T-cell (primary cell): ENCODE measurements at regions of chr5 and their contacts with region 1.

Region 1: DNA sequence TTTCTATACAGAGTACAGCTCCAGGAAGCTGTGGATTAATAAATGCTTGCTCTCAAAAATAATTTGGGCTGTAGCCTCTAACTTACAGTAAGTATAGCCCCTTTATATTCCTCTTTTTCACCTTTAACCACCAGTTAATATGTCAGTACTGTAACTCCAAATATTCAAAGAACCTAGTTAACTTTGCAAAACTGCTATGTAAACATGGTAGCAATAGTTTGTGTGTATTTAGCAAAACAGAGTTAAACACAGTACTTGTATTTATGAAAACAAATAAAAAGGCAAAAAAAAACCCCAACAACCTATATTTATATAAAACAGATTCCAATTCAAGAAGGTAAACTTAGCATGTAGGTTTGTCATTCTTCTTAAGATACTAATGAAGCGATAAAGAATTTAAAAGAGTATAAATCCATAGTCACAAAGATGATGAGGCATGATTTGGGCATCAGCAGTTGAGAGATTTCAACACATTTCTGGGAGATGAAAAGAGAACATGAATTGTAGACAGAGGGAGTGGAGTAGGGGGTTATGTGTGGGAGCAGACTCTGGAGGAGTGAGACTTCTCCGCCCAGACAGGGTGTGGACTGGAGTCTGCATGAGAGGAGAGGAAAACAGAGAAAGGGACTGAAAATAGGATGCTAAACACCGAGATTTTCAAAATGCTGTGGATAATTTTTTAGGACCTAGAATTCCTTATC is 47.0 kb upstream of the F2RL1 start:
- DNase-seq: no peak
- ATAC-seq: no peak
- H3K4me3 ChIP-seq: no peak overlapping the region
- H3K4me3 Mint-ChIP-seq: no peak overlapping the region
- H3K27ac ChIP-seq: no peak overlapping the region
- H3K27ac Mint-ChIP-seq: no peak overlapping the region
- H3K4me1 ChIP-seq: peaks cover 0 to 3% of the 10 kb centered on the region in 2 experiments
- H3K4me1 Mint-ChIP-seq: peaks cover 0 to 6% (median 3%) of the 10 kb centered on the region in 3 donors
- H3K27me3 ChIP-seq: no peaks in the 10 kb centered on the region
- H3K27me3 Mint-ChIP-seq: no peaks in the 10 kb centered on the region

Region 2: GRCh38 chr5:75461679-75462078 is 1310.2 kb before region 1 on chr5:
- CTCF ChIA-PET with region 1: no interaction called
- POLR2A ChIA-PET with region 1: no interaction called
- DNase-seq: no peak
- ATAC-seq: no peak
- H3K4me3 ChIP-seq: no peak overlapping the region
- H3K4me3 Mint-ChIP-seq: no peak overlapping the region
- H3K27ac ChIP-seq: no peak overlapping the region
- H3K27ac Mint-ChIP-seq: no peak overlapping the region
- H3K4me1 ChIP-seq: peaks cover 2 to 11% of the 10 kb centered on the region in 2 experiments
- H3K4me1 Mint-ChIP-seq: peaks cover 52 to 54% (median 53%) of the 10 kb centered on the region in 3 donors
- H3K27me3 ChIP-seq: no peaks in the 10 kb centered on the region
- H3K27me3 Mint-ChIP-seq: no peaks in the 10 kb centered on the region

Region 3: DNA sequence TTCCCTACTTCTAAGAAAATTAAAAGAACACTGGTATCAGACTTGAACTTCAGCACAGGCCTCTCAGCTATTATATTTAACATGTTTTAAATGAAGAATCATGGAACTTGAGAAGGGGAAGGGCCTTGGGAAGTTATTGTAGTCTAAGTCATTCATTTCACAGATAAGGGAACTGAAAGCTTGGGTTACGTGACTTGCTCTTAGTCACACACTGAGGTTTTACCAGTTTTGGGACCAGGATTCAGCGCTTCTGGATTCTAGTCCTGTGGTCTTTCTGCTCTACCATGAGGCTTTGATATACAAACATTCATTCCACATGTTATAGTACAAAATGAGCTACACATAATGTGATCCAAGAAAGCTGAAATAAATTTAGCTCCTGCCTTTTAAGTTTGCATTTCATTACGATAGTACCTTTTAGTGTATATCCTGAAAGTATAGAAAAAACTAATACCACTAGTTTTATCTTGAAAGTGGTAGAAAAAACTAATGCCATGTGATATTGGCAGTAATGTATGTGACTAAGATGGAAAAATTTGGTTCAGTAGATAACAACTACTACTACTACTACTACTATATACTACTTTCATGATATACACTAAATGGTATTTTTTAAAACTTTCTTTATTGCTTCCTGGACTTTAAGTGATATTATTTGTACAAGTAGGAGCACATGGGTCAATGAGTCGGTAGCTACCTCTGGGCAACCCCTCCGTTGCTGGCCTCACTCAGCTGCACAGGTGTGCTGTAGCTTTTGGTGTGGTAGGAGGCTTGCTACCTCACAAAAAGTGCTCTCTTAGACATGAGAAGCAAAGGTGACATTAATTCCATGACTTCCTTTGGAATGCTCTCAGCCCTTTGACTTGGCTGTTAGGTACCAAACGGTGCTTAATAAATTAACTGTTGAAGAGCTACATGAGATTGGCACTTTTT is 189.4 kb before region 1 on chr5:
- CTCF ChIA-PET with region 1: interaction called, 5 to 11 read pairs
- POLR2A ChIA-PET with region 1: no interaction called
- DNase-seq: no peak
- ATAC-seq: no peak
- H3K4me3 ChIP-seq: no peak overlapping the region
- H3K4me3 Mint-ChIP-seq: no peak overlapping the region
- H3K27ac ChIP-seq: no peak overlapping the region
- H3K27ac Mint-ChIP-seq: peak overlapping the region in 1 of 2 donors; percentile 53
- H3K4me1 ChIP-seq: peaks cover 0 to 2% of the 10 kb centered on the region in 2 experiments
- H3K4me1 Mint-ChIP-seq: peaks cover 0 to 31% (median 27%) of the 10 kb centered on the region in 3 donors
- H3K27me3 ChIP-seq: no peaks in the 10 kb centered on the region
- H3K27me3 Mint-ChIP-seq: no peaks in the 10 kb centered on the region

Region 4: DNA sequence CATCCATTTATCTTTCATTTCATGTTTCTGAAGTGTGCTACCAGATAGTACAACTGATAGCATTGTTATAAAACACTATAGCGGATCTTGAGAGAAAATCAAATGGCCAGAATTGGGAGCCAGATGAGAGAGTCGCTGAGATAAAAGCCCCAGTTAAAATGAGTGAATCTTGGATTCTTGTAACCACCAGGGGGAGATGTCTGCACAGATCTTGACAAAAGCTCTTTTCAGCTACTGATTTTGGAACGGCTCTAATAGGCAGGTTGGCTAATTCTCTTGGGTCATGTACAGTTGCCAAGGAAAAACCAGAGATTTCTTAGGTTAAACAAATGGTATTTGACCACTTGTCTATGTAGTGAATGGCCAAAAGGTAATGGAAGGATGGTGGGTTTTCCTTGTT is 170.4 kb before region 1 on chr5:
- CTCF ChIA-PET with region 1: interaction called, 4 to 73 read pairs
- POLR2A ChIA-PET with region 1: interaction called in 1 of 2 experiments, 4 read pairs
- DNase-seq: peak in 12 of 35 experiments; percentile 6 to 72 (median 19)
- ATAC-seq: peak; percentile 49 to 63 (median 55)
- H3K4me3 ChIP-seq: no peak overlapping the region
- H3K4me3 Mint-ChIP-seq: no peak overlapping the region
- H3K27ac ChIP-seq: no peak overlapping the region
- H3K27ac Mint-ChIP-seq: no peak overlapping the region
- H3K4me1 ChIP-seq: no peaks in the 10 kb centered on the region
- H3K4me1 Mint-ChIP-seq: peaks cover 0 to 9% (median 9%) of the 10 kb centered on the region in 3 donors
- H3K27me3 ChIP-seq: no peaks in the 10 kb centered on the region
- H3K27me3 Mint-ChIP-seq: no peaks in the 10 kb centered on the region

Region 5: DNA sequence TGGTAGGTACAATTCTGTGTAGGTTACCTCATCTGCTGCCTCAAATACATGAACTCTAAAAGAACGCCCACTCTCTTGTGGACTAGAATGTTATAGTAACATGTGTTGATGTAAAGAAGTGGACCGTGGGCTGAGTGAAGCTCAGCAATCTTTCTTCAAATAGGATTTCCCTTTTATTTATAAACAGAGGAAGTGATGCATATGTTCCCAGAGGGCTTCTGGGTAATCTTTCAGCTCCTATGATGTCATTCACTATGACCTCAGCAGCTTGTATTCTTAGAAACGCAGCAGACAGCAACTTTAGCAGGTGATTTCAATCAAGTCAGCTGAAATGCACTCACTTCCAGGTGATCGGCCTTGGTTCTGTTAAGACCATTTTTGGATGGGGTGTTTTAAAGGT is 163.0 kb before region 1 on chr5:
- CTCF ChIA-PET with region 1: interaction called, 4 to 20 read pairs
- POLR2A ChIA-PET with region 1: interaction called in 1 of 2 experiments, 5 read pairs
- DNase-seq: peak in 5 of 35 experiments; percentile 2 to 34 (median 10)
- ATAC-seq: peak in 2 of 4 experiments; percentile 12 to 54
- H3K4me3 ChIP-seq: no peak overlapping the region
- H3K4me3 Mint-ChIP-seq: no peak overlapping the region
- H3K27ac ChIP-seq: no peak overlapping the region
- H3K27ac Mint-ChIP-seq: no peak overlapping the region
- H3K4me1 ChIP-seq: no peaks in the 10 kb centered on the region
- H3K4me1 Mint-ChIP-seq: peaks cover 6 to 33% (median 12%) of the 10 kb centered on the region in 3 donors
- H3K27me3 ChIP-seq: no peaks in the 10 kb centered on the region
- H3K27me3 Mint-ChIP-seq: no peaks in the 10 kb centered on the region

Region 6: DNA sequence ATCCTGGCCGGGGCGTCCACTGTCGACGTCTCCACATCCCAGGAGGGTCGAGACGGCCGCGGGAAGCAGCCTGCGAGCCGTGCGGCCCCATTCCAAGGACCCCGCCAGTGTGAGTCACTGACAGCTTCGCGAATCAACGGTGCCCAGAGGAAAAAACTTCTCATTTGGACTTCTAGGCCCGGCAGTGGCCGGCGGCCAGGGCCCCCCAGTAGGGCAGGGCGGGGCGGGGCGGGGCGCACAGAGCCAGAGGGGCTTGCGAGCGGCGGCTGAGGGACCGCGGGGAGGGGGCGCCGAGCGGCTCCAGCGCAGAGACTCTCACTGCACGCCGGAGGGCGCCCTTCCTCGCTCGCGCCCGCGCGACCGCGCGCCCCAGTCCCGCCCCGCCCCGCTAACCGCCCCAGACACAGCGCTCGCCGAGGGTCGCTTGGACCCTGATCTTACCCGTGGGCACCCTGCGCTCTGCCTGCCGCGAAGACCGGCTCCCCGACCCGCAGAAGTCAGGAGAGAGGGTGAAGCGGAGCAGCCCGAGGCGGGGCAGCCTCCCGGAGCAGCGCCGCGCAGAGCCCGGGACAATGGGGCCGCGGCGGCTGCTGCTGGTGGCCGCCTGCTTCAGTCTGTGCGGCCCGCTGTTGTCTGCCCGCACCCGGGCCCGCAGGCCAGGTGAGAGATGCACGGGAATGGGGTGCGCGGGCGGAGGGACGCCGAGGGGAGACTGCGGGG is 56.0 kb before region 1 on chr5 and contains the start of gene F2R:
- CTCF ChIA-PET with region 1: interaction called in 1 of 2 experiments, 19 read pairs
- POLR2A ChIA-PET with region 1: no interaction called
- DNase-seq: peak in 33 of 35 experiments; percentile 19 to 78 (median 47)
- ATAC-seq: peak; percentile 81 to 85 (median 83)
- H3K4me3 ChIP-seq: peak within 1 kb of the TSS; percentile 82 to 86
- H3K4me3 Mint-ChIP-seq: peak within 1 kb of the TSS; percentile 82 to 87 (median 85)
- H3K27ac ChIP-seq: no peak within 1 kb of the TSS
- H3K27ac Mint-ChIP-seq: peak within 1 kb of the TSS; percentile 34 to 52
- H3K4me1 ChIP-seq: peaks cover 3 to 47% of the 10 kb centered on the region in 2 experiments
- H3K4me1 Mint-ChIP-seq: peaks cover 28 to 49% (median 32%) of the 10 kb centered on the region in 3 donors
- H3K27me3 ChIP-seq: peaks cover 0 to 19% of the 10 kb centered on the region in 2 experiments
- H3K27me3 Mint-ChIP-seq: peaks cover 22 to 30% of the 10 kb centered on the region in 2 donors
- total RNA-seq, gene F2R: 4.3 to 16.3 (median 9.6) TPM

Region 7: DNA sequence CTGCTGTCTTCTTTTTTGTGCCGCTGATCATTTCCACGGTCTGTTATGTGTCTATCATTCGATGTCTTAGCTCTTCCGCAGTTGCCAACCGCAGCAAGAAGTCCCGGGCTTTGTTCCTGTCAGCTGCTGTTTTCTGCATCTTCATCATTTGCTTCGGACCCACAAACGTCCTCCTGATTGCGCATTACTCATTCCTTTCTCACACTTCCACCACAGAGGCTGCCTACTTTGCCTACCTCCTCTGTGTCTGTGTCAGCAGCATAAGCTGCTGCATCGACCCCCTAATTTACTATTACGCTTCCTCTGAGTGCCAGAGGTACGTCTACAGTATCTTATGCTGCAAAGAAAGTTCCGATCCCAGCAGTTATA is 38.8 kb before region 1 on chr5:
- CTCF ChIA-PET with region 1: interaction called, 8 to 24 read pairs
- POLR2A ChIA-PET with region 1: interaction called in 1 of 2 experiments, 3 read pairs
- DNase-seq: peak in 33 of 35 experiments; percentile 13 to 83 (median 52)
- ATAC-seq: peak; percentile 75 to 93 (median 79)
- H3K4me3 ChIP-seq: peak overlapping the region in 1 of 2 donors; percentile 37
- H3K4me3 Mint-ChIP-seq: peak overlapping the region; percentile 40 to 55 (median 41)
- H3K27ac ChIP-seq: peak overlapping the region; percentile 87
- H3K27ac Mint-ChIP-seq: peak overlapping the region; percentile 79 to 81
- H3K4me1 ChIP-seq: peaks cover 0 to 46% of the 10 kb centered on the region in 2 experiments
- H3K4me1 Mint-ChIP-seq: peaks cover 13 to 46% (median 33%) of the 10 kb centered on the region in 3 donors
- H3K27me3 ChIP-seq: no peaks in the 10 kb centered on the region
- H3K27me3 Mint-ChIP-seq: peaks cover 0 to 3% of the 10 kb centered on the region in 2 donors

Region 8: DNA sequence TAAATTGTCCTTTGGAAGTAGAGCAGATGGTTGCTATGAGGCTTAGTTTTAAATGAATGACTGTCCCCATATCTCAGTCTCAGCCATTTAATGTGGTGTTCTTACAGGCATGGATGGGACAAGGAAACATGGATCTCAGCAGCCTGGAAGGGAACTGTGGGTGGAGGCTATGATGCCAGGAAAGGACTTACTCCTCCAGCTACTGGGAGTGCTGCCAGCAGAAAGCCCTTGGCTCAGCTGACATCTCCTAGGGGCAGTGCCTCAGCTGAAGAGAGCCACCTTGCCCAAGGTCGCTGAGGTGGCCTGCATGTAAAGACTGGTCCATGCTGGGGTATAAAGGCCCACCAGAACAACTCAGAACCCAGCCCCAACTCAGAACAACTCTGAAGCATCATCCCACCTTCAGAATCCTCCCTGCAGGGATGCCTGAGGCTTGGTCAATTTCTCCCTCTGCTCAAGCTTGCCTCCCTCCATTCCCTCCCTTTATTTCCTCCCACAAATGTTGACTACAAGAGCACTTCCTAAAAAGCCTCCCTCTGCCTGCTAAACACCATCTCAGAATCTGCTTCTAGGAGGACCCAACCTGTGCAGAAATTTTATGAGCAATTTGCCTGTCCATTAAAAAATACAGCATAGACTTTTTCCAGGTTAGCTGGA is 436.8 kb after region 1 on chr5:
- CTCF ChIA-PET with region 1: no interaction called
- POLR2A ChIA-PET with region 1: no interaction called
- DNase-seq: no peak
- ATAC-seq: no peak
- H3K4me3 ChIP-seq: no peak overlapping the region
- H3K4me3 Mint-ChIP-seq: peak overlapping the region; percentile 73 to 91 (median 81)
- H3K27ac ChIP-seq: no peak overlapping the region
- H3K27ac Mint-ChIP-seq: no peak overlapping the region
- H3K4me1 ChIP-seq: peaks cover 0 to 8% of the 10 kb centered on the region in 2 experiments
- H3K4me1 Mint-ChIP-seq: peaks cover 7 to 17% (median 13%) of the 10 kb centered on the region in 3 donors
- H3K27me3 ChIP-seq: peaks cover 0 to 23% of the 10 kb centered on the region in 2 experiments
- H3K27me3 Mint-ChIP-seq: peaks cover 34 to 44% of the 10 kb centered on the region in 2 donors